ENCODE measurements at regions of chr22 and their contacts with region 1.

Region 1: DNA sequence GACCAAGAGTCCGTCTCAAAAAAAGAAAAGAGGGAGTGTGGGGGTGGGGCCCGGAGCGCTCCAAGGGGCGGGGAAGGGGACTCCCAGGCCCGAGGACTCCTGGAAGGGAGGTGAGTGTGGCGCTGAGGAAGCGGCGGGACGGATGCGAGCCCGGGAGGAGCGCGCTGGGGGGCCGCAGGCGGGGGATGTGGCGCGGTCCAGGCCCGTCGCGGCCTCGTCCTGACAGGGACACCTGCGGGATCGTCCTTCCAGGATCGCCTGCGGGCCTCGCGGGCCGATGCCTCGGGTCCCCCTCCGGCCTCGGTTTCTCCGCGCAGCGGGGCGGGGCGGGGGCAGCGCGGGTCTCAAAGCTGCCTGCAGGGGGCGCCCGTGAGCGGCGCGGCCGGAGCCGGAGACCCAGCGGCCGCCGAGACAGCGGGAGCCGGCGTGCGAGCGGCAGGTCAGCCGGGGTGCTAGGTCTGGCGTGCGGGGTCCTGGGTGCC is 3.8 kb upstream of the ADORA2A start:
- DNase-seq: peak; percentile 66
- ATAC-seq: peak; percentile 52
- H3K4me3 Mint-ChIP-seq: peak overlapping the region; percentile 62
- H3K27ac Mint-ChIP-seq: no peak overlapping the region
- H3K4me1 Mint-ChIP-seq: peaks cover 32% of the 10 kb centered on the region
- H3K27me3 Mint-ChIP-seq: peaks cover 10% of the 10 kb centered on the region

Region 2: GRCh38 chr22:24410110-24410856 is 13.3 kb before region 1 on chr22:
- CTCF ChIA-PET with region 1: interaction called, 41 read pairs
- DNase-seq: peak; percentile 80
- ATAC-seq: peak; percentile 80
- H3K4me3 Mint-ChIP-seq: no peak overlapping the region
- H3K27ac Mint-ChIP-seq: peak overlapping the region; percentile 87
- H3K4me1 Mint-ChIP-seq: peaks cover 40% of the 10 kb centered on the region
- H3K27me3 Mint-ChIP-seq: no peaks in the 10 kb centered on the region

Region 3: DNA sequence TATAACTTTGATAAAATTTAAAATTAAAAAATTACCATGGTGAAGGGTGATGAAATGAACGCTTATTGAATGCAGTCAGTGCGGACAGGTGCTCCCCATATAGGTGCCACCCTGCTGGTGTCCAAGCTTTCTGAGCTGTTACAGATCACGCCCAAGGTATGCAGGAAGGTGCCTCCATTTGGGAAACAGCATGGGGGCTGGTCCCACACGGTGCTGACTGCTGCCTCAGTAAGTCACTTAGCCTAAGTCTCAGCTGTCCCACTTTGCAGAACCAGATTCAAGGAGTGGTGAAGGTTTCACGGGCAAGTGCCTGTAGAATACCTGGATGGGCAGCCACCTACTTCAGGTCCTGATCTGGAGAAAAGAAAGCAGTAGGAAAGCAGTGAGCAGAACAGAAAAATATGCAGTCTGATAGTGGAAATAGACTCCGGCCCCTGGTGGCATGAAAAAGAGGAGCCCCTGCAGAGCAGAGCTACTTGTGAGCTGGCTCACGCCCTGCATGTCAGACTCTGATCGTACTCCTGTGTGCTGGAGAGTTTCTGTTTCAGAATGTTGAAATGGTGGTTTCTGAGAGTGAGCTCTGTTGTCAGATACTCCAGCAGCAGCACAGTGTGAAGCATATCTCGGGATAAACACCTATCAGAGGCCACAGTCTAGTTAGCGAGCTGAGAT is 37.0 kb after region 1 on chr22:
- CTCF ChIA-PET with region 1: interaction called, 11 read pairs
- DNase-seq: peak; percentile 55
- ATAC-seq: peak; percentile 94
- H3K4me3 Mint-ChIP-seq: peak overlapping the region; percentile 46
- H3K27ac Mint-ChIP-seq: peak overlapping the region; percentile 80
- H3K4me1 Mint-ChIP-seq: peaks cover 19% of the 10 kb centered on the region
- H3K27me3 Mint-ChIP-seq: no peaks in the 10 kb centered on the region

Region 4: DNA sequence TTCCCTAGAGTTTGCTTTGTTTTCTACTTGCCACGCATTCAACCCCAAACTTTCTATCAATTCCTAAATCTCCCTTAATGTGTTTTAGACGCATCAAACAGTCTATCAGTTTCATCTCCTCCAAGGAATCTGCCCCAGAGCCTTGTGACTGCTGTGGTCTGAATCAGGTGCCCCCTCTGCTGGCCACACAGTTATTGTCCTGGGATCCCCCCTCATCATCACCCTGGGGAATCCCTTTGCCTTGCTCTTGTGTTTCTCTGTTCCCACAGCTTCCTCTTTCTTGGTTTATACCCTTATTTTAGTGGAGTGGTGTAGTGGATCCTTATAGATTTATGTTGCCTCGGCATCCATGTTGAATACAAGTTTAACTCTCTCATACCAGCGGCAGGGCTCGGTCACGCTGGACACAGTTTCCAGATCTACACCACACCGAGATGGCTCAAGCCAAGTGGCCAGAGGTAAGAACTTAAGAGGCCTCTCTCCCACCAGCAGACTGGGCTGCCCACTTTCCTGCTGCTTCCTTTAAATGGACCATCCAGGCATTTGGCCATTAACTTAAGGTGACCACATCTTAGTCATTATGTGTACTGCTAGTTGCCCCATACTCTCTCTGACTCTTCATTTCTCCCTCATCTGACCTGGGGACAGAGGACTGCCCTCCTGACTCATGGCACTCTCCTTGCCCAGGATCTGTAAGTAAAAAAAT is 79.7 kb after region 1 on chr22:
- CTCF ChIA-PET with region 1: interaction called, 72 read pairs
- DNase-seq: peak; percentile 76
- ATAC-seq: peak; percentile 70
- H3K4me3 Mint-ChIP-seq: no peak overlapping the region
- H3K27ac Mint-ChIP-seq: no peak overlapping the region
- H3K4me1 Mint-ChIP-seq: peaks cover 21% of the 10 kb centered on the region
- H3K27me3 Mint-ChIP-seq: peaks cover 11% of the 10 kb centered on the region

Measured in activated CD8-positive, alpha-beta memory T cell treated with anti-CD3 and anti-CD28 coated beads, Interleukin-2, amount 10 ng/mL, durations not matched to agents 7 days and 5 days (primary cell).